PC-9 (cell line): ENCODE measurements at regions of chr3 and their contacts with region 1.

Region 1: GRCh38 chr3:23600167-23600871 is 205.4 kb upstream of the UBE2E1 start:
- DNase-seq: peak; percentile 69 to 90
- H3K4me3 ChIP-seq: no peak overlapping the region
- H3K27ac ChIP-seq: peak overlapping the region; percentile 79
- H3K4me1 ChIP-seq: peaks cover 22% of the 10 kb centered on the region
- H3K27me3 ChIP-seq: no peaks in the 10 kb centered on the region
- CTCF ChIP-seq: no peak

Region 2: GRCh38 chr3:23239211-23240068 is 360.9 kb before region 1 on chr3:
- CTCF ChIA-PET with region 1: no interaction called
- POLR2A ChIA-PET with region 1: no interaction called
- intact Hi-C with region 1: no loop called
- DNase-seq: no peak
- H3K4me3 ChIP-seq: no peak overlapping the region
- H3K27ac ChIP-seq: no peak overlapping the region
- H3K4me1 ChIP-seq: peaks cover 12% of the 10 kb centered on the region
- H3K27me3 ChIP-seq: no peaks in the 10 kb centered on the region
- CTCF ChIP-seq: no peak

Region 3: DNA sequence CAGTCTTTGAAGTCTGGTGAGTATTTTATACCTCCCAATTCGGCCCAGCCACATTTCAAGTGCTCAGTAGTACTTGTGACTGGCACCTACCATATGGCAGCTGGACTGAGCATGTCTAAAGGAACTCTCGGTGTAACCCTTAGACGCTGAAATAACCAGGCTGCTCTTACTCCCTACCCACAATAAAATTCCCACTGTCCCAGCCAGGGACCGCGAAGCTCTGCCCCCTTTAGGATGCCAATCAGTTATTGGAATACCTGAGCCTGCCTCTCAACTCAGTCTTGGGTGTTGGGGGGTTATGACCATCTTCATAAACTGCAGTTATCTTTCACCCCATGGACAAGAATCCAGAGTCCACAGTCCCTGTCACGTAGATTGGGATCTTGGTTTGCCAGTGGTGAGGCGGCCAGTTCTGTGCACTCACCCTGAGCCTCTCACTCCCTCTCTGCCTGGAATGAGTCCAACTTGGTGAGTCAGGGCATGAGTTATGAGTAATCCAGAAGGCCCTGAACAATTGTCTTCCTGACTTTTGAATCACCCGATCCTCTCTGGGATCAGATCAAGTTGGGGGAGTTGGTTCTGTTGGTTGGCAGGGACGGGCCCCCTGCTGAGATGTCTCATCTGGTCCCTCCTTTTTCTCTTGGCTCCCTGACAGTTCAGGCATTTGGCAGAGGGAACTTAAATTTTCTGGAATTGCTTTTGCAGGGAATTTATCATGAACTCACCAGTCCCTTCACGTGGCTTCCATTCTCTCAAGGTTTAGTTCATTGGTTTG is 85.4 kb after region 1 on chr3:
- CTCF ChIA-PET with region 1: no interaction called
- POLR2A ChIA-PET with region 1: no interaction called
- intact Hi-C with region 1: loop called (anchors 5 kb)
- DNase-seq: peak; percentile 91 to 96
- H3K4me3 ChIP-seq: no peak overlapping the region
- H3K27ac ChIP-seq: peak overlapping the region; percentile 82
- H3K4me1 ChIP-seq: peaks cover 26% of the 10 kb centered on the region
- H3K27me3 ChIP-seq: no peaks in the 10 kb centered on the region
- CTCF ChIP-seq: no peak

Region 4: DNA sequence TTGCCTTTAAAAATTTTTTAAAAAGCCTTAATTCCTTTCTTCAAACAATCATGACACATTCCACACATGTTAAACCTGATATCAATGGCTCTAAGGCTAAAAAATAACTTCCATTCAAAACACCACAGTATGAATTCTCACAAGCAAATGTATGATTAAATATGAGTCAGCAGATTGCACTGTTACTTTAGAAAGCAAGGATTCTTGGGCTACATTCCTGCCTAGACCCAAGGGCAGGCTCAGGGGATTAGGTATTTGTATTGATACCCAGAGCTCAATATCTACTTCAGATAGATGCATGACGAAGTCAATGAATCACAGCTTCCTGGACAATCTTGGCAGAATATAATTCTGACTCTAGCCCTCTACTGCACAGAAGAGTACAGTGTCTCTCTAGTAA is 1893.5 kb after region 1 on chr3:
- CTCF ChIA-PET with region 1: no interaction called
- POLR2A ChIA-PET with region 1: no interaction called
- intact Hi-C with region 1: no loop called
- DNase-seq: no peak
- H3K4me3 ChIP-seq: no peak overlapping the region
- H3K27ac ChIP-seq: no peak overlapping the region
- H3K4me1 ChIP-seq: no peaks in the 10 kb centered on the region
- H3K27me3 ChIP-seq: no peaks in the 10 kb centered on the region
- CTCF ChIP-seq: no peak